AG04449 (cell line): ENCODE measurements at regions of chrX and their contacts with region 1.

Region 1: GRCh38 chrX:55057675-55058249 is 17.1 kb upstream of the PAGE2B start:
- DNase-seq: no peak
- H3K4me3 ChIP-seq: no peak overlapping the region
- CTCF ChIP-seq: peak; percentile 65

Region 2: DNA sequence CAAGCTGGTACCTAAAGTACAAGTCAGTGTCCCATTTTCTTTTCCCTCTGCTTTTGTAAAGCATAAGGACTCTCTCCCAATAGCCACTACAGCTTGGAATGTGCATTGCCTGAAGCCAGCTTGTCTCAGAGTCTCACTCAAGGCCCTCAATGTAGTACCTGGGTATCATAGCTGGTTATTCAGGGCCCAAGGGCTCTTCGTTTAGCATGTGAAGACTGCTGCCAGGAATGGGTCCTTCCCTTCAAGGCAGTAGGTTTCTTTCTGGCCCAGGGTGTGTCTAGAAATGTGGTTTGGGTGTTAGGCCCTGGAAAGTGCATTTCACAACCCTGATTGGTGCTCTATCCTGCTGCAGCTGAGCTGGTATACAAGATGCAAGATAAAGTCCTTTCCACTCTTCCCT is 218.5 kb before region 1 on chrX:
- CTCF ChIA-PET with region 1: no interaction called
- POLR2A ChIA-PET with region 1: no interaction called
- DNase-seq: no peak
- H3K4me3 ChIP-seq: no peak overlapping the region
- CTCF ChIP-seq: no peak

Region 3: GRCh38 chrX:54891573-54891972 is 166.2 kb before region 1 on chrX:
- CTCF ChIA-PET with region 1: interaction called, 15 read pairs
- POLR2A ChIA-PET with region 1: no interaction called
- DNase-seq: peak; percentile 7
- H3K4me3 ChIP-seq: no peak overlapping the region
- CTCF ChIP-seq: peak; percentile 33

Region 4: GRCh38 chrX:55045716-55046115 is 12.0 kb before region 1 on chrX:
- CTCF ChIA-PET with region 1: no interaction called
- POLR2A ChIA-PET with region 1: no interaction called
- DNase-seq: no peak
- H3K4me3 ChIP-seq: no peak overlapping the region
- CTCF ChIP-seq: no peak